Gastrocnemius medialis (tissue), 4 donors: ENCODE measurements at regions of chr18 and their contacts with region 1.

Region 1: GRCh38 chr18:22032392-22032961 is 136.9 kb upstream of the GATA6 start:
- DNase-seq: no peak
- ATAC-seq: no peak
- H3K4me3 ChIP-seq: no peak overlapping the region
- H3K27ac ChIP-seq: no peak overlapping the region
- H3K4me1 ChIP-seq: no peaks in the 10 kb centered on the region
- H3K27me3 ChIP-seq: peaks cover 0 to 3% (median 0%) of the 10 kb centered on the region in 3 donors
- CTCF ChIP-seq: no peak
- POLR2A ChIP-seq: no peak

Region 2: GRCh38 chr18:21361307-21361880 is 671.1 kb before region 1 on chr18:
- in situ Hi-C with region 1: no loop called
- intact Hi-C with region 1: no loop called
- DNase-seq: no peak
- ATAC-seq: no peak
- H3K4me3 ChIP-seq: no peak overlapping the region
- H3K27ac ChIP-seq: no peak overlapping the region
- H3K4me1 ChIP-seq: peaks cover 0 to 11% of the 10 kb centered on the region in 2 donors
- H3K27me3 ChIP-seq: no peaks in the 10 kb centered on the region
- CTCF ChIP-seq: no peak
- POLR2A ChIP-seq: no peak

Region 3: GRCh38 chr18:22074282-22075069 is 42.0 kb after region 1 on chr18:
- in situ Hi-C with region 1: no loop called
- intact Hi-C with region 1: no loop called
- DNase-seq: no peak
- ATAC-seq: no peak
- H3K4me3 ChIP-seq: no peak overlapping the region
- H3K27ac ChIP-seq: no peak overlapping the region
- H3K4me1 ChIP-seq: no peaks in the 10 kb centered on the region
- H3K27me3 ChIP-seq: no peaks in the 10 kb centered on the region
- CTCF ChIP-seq: no peak
- POLR2A ChIP-seq: no peak

Region 4: DNA sequence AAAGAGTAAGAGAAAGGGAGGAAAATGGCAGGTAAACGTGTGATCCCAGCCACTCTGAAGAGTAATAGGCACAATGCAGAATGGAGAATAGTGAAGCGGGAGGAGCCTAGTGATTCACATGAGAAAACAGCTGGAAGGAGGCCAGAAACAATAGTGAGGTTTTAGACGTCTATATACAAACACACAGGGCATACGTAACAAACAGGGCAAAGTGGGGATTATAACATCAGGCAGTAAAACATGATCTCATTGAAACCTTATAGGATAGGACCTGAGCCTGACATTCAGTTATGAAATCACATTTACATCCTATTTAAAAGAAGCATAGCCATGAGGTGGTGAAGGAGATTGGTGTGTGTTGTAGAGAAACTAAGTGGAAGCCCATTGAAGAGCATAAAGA is 103.9 kb after region 1 on chr18:
- in situ Hi-C with region 1: no loop called
- intact Hi-C with region 1: no loop called
- DNase-seq: no peak
- ATAC-seq: no peak
- H3K4me3 ChIP-seq: no peak overlapping the region
- H3K27ac ChIP-seq: no peak overlapping the region
- H3K4me1 ChIP-seq: no peaks in the 10 kb centered on the region
- H3K27me3 ChIP-seq: no peaks in the 10 kb centered on the region
- CTCF ChIP-seq: no peak
- POLR2A ChIP-seq: no peak

Region 5: GRCh38 chr18:22250591-22250996 is 218.1 kb after region 1 on chr18:
- in situ Hi-C with region 1: loop called in 1 of 4 experiments (anchors 25 kb)
- intact Hi-C with region 1: no loop called
- DNase-seq: no peak
- ATAC-seq: no peak
- H3K4me3 ChIP-seq: no peak overlapping the region
- H3K27ac ChIP-seq: no peak overlapping the region
- H3K4me1 ChIP-seq: peaks cover 0 to 6% of the 10 kb centered on the region in 2 donors
- H3K27me3 ChIP-seq: peaks cover 0 to 2% (median 0%) of the 10 kb centered on the region in 3 donors
- CTCF ChIP-seq: no peak
- POLR2A ChIP-seq: no peak